ENCODE measurements at regions of chr5 and their contacts with region 1.

Region 1: GRCh38 chr5:179166886-179167841 is 107.0 kb downstream of the ZNF354C start:
- DNase-seq: peak; percentile 70
- ATAC-seq: peak; percentile 76

Region 2: GRCh38 chr5:178838695-178839685 is 328.2 kb before region 1 on chr5:
- intact Hi-C with region 1: no loop called
- DNase-seq: peak; percentile 71
- ATAC-seq: peak; percentile 70

Region 3: DNA sequence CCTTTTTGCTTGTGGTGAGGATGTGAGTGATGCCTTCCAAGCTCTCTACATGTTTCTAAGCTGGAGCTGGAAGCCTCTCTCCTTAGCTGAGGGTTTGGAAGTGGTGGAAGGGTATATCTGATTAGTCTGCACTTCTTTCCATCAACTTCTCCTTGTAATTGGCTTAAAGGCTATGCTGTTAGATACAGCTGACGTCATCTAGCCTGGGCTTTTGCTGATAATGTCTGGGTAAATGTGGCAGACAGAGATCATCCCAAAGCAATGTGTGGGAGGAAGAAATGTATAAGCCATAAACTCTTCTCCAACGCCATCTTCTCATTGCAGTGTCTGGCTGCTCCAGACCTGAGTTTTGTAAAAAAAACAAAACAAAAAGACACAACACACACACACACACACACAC is 77.7 kb before region 1 on chr5:
- intact Hi-C with region 1: no loop called
- DNase-seq: no peak
- ATAC-seq: no peak

Region 4: GRCh38 chr5:179187229-179187678 is 20.1 kb after region 1 on chr5:
- intact Hi-C with region 1: no loop called
- DNase-seq: no peak
- ATAC-seq: no peak

Region 5: DNA sequence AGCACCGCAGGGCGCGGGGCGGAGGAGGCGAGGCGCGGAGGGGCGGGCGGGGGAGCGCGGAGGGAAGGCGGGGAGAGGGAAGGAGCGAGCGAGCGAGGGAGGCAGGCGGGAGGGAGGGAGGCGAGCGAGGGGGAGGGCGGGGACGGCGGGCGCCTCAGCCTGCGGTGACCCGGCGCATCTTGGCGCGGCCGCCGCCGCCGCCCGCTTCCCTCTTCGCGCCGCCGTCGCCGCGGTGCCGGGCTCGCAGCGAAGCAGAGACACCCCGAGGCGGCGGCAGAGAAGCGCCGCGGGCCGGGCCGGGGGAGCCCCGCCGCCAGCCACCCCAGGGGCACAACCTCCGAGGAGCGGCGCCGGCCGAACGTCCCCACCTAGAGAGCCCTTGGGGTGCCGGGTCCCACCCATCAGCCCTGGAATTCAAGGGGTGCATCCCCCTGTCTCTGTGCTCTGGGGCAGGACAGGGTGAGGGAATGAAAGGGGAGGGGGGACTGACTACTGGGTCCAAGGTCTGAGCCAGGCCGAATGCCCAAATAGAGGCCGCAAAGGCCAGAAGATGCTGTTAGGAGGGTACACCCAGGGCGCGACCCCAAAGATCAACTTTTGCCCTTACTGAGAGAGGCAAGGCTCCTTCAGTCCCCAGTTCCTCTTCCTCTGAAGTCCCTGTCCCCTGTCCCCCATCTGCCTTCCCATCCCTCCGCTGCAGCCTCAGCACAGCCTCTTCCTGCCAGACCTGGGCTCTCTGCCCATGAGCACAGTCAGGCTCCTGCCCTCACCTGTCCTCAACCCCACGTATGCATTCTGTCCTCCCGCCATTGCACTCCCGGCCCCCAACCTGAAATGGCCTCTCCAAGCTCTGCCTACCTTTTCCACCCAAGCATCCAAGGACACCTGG is 178.5 kb after region 1 on chr5 and contains the start of gene ADAMTS2:
- intact Hi-C with region 1: loop called (anchors 10 kb)
- DNase-seq: peak; percentile 84
- ATAC-seq: peak; percentile 57
- total RNA-seq, gene ADAMTS2: 25.3 TPM

Region 6: DNA sequence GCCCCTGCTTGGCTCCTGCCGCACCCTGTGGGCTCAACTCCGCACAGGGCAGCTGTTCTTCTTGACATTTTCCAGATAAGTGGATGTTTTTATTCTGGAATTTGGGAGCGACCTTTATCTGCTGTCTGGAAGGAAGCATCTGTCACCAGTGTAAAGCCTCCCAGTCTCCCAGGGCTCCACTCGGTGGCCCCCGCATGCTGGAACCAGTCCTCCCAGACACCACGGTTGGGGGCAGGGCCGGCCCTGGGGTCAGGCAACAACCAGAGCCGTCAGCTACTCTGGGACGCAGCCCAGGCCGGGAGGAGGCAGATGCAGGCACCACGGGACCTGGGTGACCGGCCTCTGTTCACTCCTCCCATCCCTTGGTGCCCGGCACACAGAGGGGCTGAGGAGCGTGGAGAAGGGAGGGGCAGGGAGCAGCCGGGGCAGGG is 270.9 kb after region 1 on chr5:
- intact Hi-C with region 1: no loop called
- DNase-seq: no peak
- ATAC-seq: peak; percentile 26

Region 7: DNA sequence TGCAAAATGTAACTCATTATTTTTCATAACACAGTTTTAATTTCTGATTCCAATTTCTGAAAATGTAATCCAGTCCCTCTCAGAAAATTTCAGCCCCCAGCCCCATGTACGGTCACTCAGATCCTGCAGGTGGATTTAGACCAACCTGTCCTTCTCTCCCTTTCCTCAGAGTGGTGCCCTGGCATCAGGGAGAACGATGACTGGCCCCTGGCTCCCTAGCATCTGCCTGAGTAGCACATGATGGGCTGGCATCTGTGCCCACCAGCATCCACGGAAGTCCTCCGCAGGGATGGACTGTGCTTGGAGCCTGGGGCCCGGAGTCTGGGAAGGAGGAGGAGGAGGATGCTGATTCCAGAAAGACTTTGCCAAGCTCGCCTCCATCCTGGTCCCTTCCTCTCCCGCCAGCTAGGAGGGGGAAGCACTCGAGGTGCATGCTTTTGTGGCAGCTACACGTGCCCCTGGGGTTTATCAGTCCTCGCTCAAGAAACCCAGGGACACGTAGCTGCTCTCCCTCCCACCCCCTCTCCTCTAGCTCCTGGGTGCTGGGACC is 328.8 kb after region 1 on chr5:
- intact Hi-C with region 1: loop called (anchors 5 kb)
- DNase-seq: no peak
- ATAC-seq: no peak

Measured in sciatic nerve (tissue), 2 donors.